ENCODE measurements at regions of chr9 and their contacts with region 1.

Region 1: GRCh38 chr9:30411571-30411970 is 1972.9 kb upstream of the ACO1 start:
- DNase-seq: no peak
- ATAC-seq: no peak
- H3K4me3 ChIP-seq: no peak overlapping the region
- H3K27ac ChIP-seq: no peak overlapping the region
- H3K4me1 ChIP-seq: no peaks in the 10 kb centered on the region
- H3K27me3 ChIP-seq: no peaks in the 10 kb centered on the region
- CTCF ChIP-seq: no peak
- POLR2A ChIP-seq: no peak
- RAD21 ChIP-seq: no peak

Region 2: DNA sequence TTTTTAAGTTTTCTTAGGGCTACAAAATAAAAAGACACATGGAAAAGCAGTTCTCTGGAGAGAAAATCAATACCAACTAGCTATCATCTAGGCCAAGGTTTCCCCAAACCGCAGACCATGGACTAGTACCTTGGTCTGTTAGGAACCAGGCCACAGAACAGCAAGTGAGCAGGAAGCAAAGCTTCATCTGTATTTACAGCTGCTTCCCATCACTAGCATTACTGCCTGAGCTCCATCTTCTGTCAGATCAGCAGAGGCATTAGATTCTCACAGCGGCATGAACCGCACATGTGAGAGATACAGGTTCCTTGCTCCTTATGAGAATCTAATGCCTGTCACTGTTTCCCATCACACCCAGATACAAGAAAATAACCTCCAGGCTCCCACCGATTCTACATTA is 65.3 kb after region 1 on chr9:
- CTCF ChIA-PET with region 1: no interaction called
- POLR2A ChIA-PET with region 1: no interaction called
- RAD21 ChIA-PET with region 1: no interaction called
- intact Hi-C with region 1: loop called (anchors 2 kb)
- DNase-seq: no peak
- ATAC-seq: no peak
- H3K4me3 ChIP-seq: no peak overlapping the region
- H3K27ac ChIP-seq: no peak overlapping the region
- H3K4me1 ChIP-seq: no peaks in the 10 kb centered on the region
- H3K27me3 ChIP-seq: no peaks in the 10 kb centered on the region
- CTCF ChIP-seq: no peak
- POLR2A ChIP-seq: no peak
- RAD21 ChIP-seq: no peak

Measured in HCT116 (cell line).